Panc1 (cell line): ENCODE measurements at regions of chr18 and their contacts with region 1.

Region 1: DNA sequence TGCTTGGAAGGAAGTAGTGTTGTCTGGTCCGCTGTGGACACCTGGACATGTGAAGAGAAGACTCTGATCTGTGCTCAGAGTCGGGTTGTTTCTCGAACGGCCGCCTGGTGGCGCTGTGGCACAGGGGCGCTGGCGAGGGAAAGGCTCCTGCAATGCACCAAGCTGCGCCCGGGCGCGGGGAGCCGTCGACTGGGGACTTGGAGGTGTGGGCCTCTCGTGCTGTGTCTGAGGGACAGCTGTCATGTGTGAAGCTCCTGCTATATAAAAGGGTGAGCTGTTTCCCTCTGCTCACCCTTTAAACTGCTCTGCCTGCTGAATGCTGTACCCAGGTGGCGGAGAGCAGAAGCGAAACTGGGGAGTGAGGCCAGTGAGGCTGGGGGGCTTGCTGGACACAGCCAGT is 44.0 kb downstream of the GNAL start:
- DNase-seq: peak; percentile 17
- ATAC-seq: peak; percentile 93
- H3K4me3 ChIP-seq: peak overlapping the region; percentile 11 to 42; a peak in 3 of 4 replicates
- H3K27ac ChIP-seq: no peak overlapping the region
- H3K4me1 ChIP-seq: no peaks in the 10 kb centered on the region; the same call in 1 of the 2 replicates
- H3K27me3 ChIP-seq: peaks cover 16% of the 10 kb centered on the region
- CTCF ChIP-seq: peak; percentile 95

Region 2: DNA sequence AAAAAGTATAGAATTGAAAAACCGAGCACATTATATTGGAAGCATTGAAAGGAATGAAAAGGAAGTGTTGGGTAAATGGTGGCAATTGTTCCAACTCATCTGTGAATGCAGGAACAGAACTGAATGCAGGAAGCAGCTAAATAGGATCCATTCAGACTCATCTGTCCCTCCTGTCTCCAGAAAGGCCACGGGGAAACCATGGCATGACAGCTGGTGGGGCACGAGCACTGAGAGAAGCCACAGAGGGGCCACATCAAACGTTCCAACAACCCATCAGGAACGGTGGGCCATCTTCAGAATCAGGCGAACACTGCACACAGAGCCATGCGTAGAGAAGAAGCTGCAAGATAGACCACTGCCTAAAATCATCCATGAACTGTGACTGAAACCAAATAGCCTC is 262.1 kb before region 1 on chr18:
- CTCF ChIA-PET with region 1: no interaction called
- POLR2A ChIA-PET with region 1: interaction called, 10 read pairs
- in situ Hi-C with region 1: no loop called
- intact Hi-C with region 1: no loop called
- DNase-seq: no peak
- ATAC-seq: no peak
- H3K4me3 ChIP-seq: no peak overlapping the region
- H3K27ac ChIP-seq: no peak overlapping the region
- H3K4me1 ChIP-seq: no peaks in the 10 kb centered on the region
- H3K27me3 ChIP-seq: no peaks in the 10 kb centered on the region
- CTCF ChIP-seq: no peak

Region 3: GRCh38 chr18:11654736-11655605 is 78.1 kb before region 1 on chr18:
- CTCF ChIA-PET with region 1: interaction called, 6 read pairs
- POLR2A ChIA-PET with region 1: no interaction called
- in situ Hi-C with region 1: no loop called
- intact Hi-C with region 1: loop called (anchors 5 kb)
- DNase-seq: peak; percentile 17
- ATAC-seq: peak; percentile 86
- H3K4me3 ChIP-seq: no peak overlapping the region
- H3K27ac ChIP-seq: no peak overlapping the region
- H3K4me1 ChIP-seq: no peaks in the 10 kb centered on the region
- H3K27me3 ChIP-seq: peaks cover 8% of the 10 kb centered on the region; the same call in 1 of the 2 replicates
- CTCF ChIP-seq: peak; percentile 90

Region 4: DNA sequence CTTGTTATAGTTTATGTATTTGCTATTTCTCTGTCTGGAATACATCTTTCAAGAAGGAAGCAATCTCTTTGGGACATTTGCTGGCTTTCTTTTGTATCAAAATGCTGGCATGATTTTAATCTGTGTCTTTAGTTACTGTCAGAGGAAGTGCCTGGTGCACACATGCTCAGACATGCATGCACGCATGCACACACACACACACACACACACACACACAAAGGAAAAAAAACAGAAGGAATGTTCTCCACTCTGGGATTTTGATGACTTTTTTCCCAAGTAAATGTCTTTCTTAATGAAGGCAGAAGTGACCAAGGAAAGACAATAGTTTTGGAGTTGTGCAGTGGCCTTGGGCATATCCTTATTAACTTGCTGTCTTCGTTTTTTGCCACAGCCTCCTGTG is 37.3 kb before region 1 on chr18:
- CTCF ChIA-PET with region 1: no interaction called
- POLR2A ChIA-PET with region 1: no interaction called
- in situ Hi-C with region 1: no loop called
- intact Hi-C with region 1: no loop called
- DNase-seq: no peak
- ATAC-seq: no peak
- H3K4me3 ChIP-seq: no peak overlapping the region
- H3K27ac ChIP-seq: no peak overlapping the region
- H3K4me1 ChIP-seq: no peaks in the 10 kb centered on the region
- H3K27me3 ChIP-seq: peaks cover 10% of the 10 kb centered on the region; the same call in 1 of the 2 replicates
- CTCF ChIP-seq: no peak

Region 5: DNA sequence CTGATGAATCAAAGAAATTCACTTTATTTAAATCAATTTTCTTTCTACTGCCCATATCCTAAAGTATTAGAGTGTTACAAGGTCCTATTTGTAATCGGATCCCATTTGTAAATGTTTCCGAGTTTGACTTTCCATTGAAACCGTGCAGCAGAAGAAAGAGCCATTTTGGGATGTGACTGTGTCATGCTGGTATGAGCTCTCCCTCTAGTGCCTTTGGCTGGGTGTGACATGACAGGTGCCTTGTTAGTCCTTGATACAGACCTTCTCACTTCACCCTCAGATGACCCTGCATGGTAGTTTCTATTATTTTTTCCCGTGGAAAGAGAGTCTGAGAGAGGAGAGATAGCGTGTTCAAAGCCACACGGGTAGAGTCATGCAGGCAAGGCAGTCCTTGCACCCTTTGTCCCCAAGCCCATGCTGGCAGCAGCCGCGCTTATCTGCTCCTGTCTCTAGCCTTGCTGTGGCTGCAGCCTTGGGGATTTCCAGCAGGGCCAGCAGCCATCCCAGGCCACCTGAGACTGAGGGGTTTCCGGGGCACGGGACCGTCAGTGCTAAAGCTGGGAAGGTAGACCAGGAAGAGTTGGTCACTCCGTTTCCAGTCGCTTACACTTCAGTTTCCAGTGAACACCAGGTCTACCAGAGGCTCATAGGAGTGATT is 139.6 kb after region 1 on chr18:
- CTCF ChIA-PET with region 1: no interaction called
- POLR2A ChIA-PET with region 1: no interaction called
- in situ Hi-C with region 1: no loop called
- intact Hi-C with region 1: loop called (anchors 1 kb)
- DNase-seq: no peak
- ATAC-seq: peak; percentile 96
- H3K4me3 ChIP-seq: no peak overlapping the region
- H3K27ac ChIP-seq: no peak overlapping the region
- H3K4me1 ChIP-seq: no peaks in the 10 kb centered on the region
- H3K27me3 ChIP-seq: no peaks in the 10 kb centered on the region
- CTCF ChIP-seq: peak; percentile 74

Region 6: DNA sequence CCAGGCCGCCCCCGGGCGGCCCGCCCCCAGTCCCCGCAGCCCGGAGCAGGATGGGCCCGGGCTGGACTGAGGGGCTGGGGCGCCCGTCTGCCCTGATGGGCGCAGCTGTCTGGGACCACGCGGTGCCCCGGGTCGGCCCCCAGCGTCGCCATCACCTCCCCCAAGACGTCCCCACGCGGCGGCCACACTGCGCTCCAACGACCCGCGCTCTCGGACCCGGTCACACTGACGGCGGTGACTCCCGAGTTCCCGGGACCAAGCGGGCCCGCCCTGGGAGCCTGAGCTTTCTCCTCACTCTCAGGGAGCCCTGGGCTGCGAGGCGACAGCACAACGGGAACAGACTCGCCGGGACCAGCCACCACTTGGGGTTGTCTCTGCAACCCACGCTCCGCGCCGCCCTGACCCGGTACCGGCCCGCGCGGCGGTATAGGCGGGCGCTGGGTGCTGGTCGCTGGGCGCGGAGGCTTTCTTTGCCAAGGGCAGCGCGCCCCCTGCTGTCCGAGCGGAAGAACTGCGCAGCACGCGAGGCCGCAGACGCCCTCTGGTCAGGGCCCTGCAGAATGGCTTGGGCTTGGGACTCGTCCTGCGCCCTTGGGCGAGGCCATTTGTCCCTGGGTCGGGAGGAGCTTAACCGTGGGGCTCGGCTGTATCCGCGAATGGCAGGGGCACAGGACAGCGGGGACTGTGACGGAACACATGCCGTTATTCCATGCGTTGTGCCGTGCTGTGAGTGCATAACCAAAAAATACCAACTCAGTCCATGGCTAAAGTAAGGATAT is 305.8 kb after region 1 on chr18:
- CTCF ChIA-PET with region 1: no interaction called
- POLR2A ChIA-PET with region 1: no interaction called
- in situ Hi-C with region 1: no loop called
- intact Hi-C with region 1: loop called (anchors 5 kb)
- DNase-seq: peak; percentile 57
- ATAC-seq: peak; percentile 98
- H3K4me3 ChIP-seq: peak overlapping the region; percentile 49 to 53
- H3K27ac ChIP-seq: peak overlapping the region; percentile 63; the same call in 1 of the 2 replicates
- H3K4me1 ChIP-seq: no peaks in the 10 kb centered on the region
- H3K27me3 ChIP-seq: no peaks in the 10 kb centered on the region
- CTCF ChIP-seq: peak; percentile 98